ENCODE measurements at regions of chr3 and their contacts with region 1.

Region 1: GRCh38 chr3:126475413-126476114 is at the start of gene ZXDC:
- DNase-seq: peak; percentile 85 to 97 (median 92)
- ATAC-seq: peak; percentile 81
- H3K4me3 ChIP-seq: peak within 1 kb of the TSS; percentile 68 to 72
- H3K4me3 Mint-ChIP-seq: peak within 1 kb of the TSS; percentile 88
- H3K27ac ChIP-seq: peak within 1 kb of the TSS; percentile 72 to 84
- H3K27ac Mint-ChIP-seq: peak within 1 kb of the TSS; percentile 89
- H3K4me1 ChIP-seq: peaks cover 37% of the 10 kb centered on the region
- H3K4me1 Mint-ChIP-seq: peaks cover 46% of the 10 kb centered on the region
- H3K27me3 ChIP-seq: no peaks in the 10 kb centered on the region
- H3K27me3 Mint-ChIP-seq: no peaks in the 10 kb centered on the region
- CTCF ChIP-seq: peak; percentile 25
- total RNA-seq, gene ZXDC: 60.7 to 62.8 TPM

Region 2: GRCh38 chr3:125594581-125595011 is 881.0 kb before region 1 on chr3:
- CTCF ChIA-PET with region 1: no interaction called
- POLR2A ChIA-PET with region 1: no interaction called
- intact Hi-C with region 1: loop called (anchors 2 to 5 kb)
- DNase-seq: peak in 2 of 9 experiments; percentile 6 to 17
- ATAC-seq: no peak
- H3K4me3 ChIP-seq: peak overlapping the region; percentile 85 to 91
- H3K4me3 Mint-ChIP-seq: peak overlapping the region; percentile 92
- H3K27ac ChIP-seq: peak overlapping the region; percentile 68 to 87
- H3K27ac Mint-ChIP-seq: peak overlapping the region; percentile 77
- H3K4me1 ChIP-seq: peaks cover 16% of the 10 kb centered on the region
- H3K4me1 Mint-ChIP-seq: peaks cover 44% of the 10 kb centered on the region
- H3K27me3 ChIP-seq: no peaks in the 10 kb centered on the region
- H3K27me3 Mint-ChIP-seq: no peaks in the 10 kb centered on the region
- CTCF ChIP-seq: no peak

Region 3: DNA sequence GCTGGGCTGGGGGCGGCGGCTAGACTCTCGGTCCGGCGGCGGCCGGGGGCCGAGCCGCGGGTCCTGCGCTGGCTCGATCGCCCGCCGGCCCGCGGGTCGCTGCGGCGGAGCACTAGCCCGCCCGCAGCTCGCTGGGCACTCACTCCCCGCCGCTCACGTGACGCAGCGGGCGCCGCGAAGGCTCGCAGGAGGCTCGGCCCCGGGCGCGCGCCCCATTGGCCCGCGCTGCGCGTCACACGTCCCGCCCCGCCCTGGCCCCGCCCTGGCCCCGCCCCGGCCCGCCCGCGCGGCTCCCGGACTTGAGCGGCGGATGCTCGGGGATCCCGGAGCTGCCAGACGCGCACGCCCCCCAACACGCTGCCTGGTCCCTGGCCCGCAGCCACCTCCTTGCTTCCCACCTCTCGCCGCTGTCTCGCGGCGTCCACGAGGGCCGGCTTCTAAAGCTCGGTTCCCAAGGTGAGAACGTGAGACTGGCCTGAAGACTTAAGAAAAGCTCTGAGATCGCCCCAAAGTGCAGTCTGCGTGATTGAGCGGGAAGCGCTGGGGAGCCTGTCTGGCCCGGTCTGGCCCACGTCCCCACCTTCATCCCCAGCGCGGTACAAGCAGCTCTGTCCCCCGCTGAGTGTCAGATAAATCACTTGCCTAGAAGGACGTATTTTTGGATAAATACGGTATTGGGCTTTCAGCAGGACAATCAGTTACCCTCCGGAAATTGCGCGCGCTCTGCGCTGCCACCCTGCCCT is 118.1 kb before region 1 on chr3 and contains the start of gene KLF15:
- CTCF ChIA-PET with region 1: no interaction called
- POLR2A ChIA-PET with region 1: interaction called, 5 read pairs
- intact Hi-C with region 1: loop called in 1 of 2 experiments (anchors 2 kb)
- DNase-seq: peak; percentile 46 to 85 (median 71)
- ATAC-seq: peak; percentile 94
- H3K4me3 ChIP-seq: peak within 1 kb of the TSS; percentile 50 to 79
- H3K4me3 Mint-ChIP-seq: peak within 1 kb of the TSS; percentile 90
- H3K27ac ChIP-seq: no peak within 1 kb of the TSS
- H3K27ac Mint-ChIP-seq: peak within 1 kb of the TSS; percentile 77
- H3K4me1 ChIP-seq: peaks cover 14% of the 10 kb centered on the region
- H3K4me1 Mint-ChIP-seq: peaks cover 15% of the 10 kb centered on the region
- H3K27me3 ChIP-seq: peaks cover 13 to 19% of the 10 kb centered on the region in 2 experiments
- H3K27me3 Mint-ChIP-seq: peaks cover 52% of the 10 kb centered on the region
- CTCF ChIP-seq: no peak
- total RNA-seq, gene KLF15: 0.16 TPM in 1 of 2 experiments, not detected in the other

Region 4: DNA sequence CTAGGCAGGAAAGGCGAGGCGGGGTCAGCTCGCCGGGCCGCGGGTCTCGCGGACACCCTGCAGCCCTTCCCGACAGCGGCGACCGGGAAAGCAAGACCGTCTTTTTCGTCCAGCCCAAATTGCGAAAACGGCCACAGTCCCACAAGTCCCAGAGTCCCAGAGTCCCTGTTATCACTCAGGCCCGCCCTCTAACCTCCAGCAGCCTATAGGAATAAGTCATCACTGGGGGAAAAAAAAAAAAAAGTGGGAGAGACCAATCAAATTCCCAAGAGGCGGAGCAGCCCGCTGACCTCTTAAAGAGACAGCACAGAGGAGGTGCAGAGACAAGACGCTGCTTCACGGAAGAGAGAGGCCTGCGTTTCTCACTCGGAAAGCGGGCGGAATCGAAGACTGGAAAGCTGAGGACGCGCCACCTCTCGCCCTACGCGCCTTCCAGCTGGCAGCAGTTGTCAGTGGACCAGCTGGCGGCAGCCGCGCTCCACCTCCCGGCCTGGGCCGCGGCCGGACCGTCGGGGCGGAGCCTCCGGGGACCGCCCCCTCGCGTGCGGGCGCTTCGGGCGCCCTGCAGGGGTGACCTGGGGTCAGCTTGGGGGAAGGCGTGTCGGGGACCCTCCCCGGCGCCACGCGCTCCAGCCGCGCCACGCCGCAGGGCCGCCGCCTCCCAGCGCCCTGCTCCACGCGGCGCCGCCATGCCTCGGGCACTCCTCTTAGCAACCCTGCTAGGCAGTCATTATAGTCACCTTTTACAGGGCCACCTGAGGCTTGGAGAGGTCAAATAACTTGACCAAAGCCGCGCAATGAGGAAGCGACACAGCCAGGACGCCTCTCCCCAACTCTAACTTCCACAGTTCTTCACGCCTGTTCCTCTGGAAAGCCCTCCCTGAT is 1115.3 kb after region 1 on chr3 and contains the start of gene TPRA1:
- CTCF ChIA-PET with region 1: no interaction called
- POLR2A ChIA-PET with region 1: no interaction called
- intact Hi-C with region 1: loop called in 1 of 2 experiments (anchors 5 kb)
- DNase-seq: peak; percentile 46 to 94 (median 79)
- ATAC-seq: peak; percentile 86
- H3K4me3 ChIP-seq: peak within 1 kb of the TSS; percentile 75 to 81
- H3K4me3 Mint-ChIP-seq: peak within 1 kb of the TSS; percentile 97
- H3K27ac ChIP-seq: peak within 1 kb of the TSS; percentile 68 to 74
- H3K27ac Mint-ChIP-seq: peak within 1 kb of the TSS; percentile 91
- H3K4me1 ChIP-seq: peaks cover 20% of the 10 kb centered on the region
- H3K4me1 Mint-ChIP-seq: peaks cover 35% of the 10 kb centered on the region
- H3K27me3 ChIP-seq: no peaks in the 10 kb centered on the region
- H3K27me3 Mint-ChIP-seq: no peaks in the 10 kb centered on the region
- CTCF ChIP-seq: no peak
- total RNA-seq, gene TPRA1: 6.0 to 6.1 TPM

Region 5: GRCh38 chr3:128051837-128052594 is 1576.5 kb after region 1 on chr3 and contains the start of gene SEC61A1:
- CTCF ChIA-PET with region 1: no interaction called
- POLR2A ChIA-PET with region 1: interaction called, 3 read pairs
- intact Hi-C with region 1: loop called (anchors 5 to 10 kb)
- DNase-seq: peak; percentile 87 to 97 (median 95)
- ATAC-seq: peak; percentile 93
- H3K4me3 ChIP-seq: peak within 1 kb of the TSS; percentile 92 to 95
- H3K4me3 Mint-ChIP-seq: peak within 1 kb of the TSS; percentile 99
- H3K27ac ChIP-seq: peak within 1 kb of the TSS; percentile 78 to 85
- H3K27ac Mint-ChIP-seq: peak within 1 kb of the TSS; percentile 98
- H3K4me1 ChIP-seq: peaks cover 35% of the 10 kb centered on the region
- H3K4me1 Mint-ChIP-seq: peaks cover 43% of the 10 kb centered on the region
- H3K27me3 ChIP-seq: no peaks in the 10 kb centered on the region
- H3K27me3 Mint-ChIP-seq: no peaks in the 10 kb centered on the region
- CTCF ChIP-seq: no peak
- total RNA-seq, gene SEC61A1: 125 to 131 TPM

Measured in CD8-positive, alpha-beta T cell (primary cell).